Mammary epithelial cell (primary cell): ENCODE measurements at regions of chr10 and their contacts with region 1.

Region 1: DNA sequence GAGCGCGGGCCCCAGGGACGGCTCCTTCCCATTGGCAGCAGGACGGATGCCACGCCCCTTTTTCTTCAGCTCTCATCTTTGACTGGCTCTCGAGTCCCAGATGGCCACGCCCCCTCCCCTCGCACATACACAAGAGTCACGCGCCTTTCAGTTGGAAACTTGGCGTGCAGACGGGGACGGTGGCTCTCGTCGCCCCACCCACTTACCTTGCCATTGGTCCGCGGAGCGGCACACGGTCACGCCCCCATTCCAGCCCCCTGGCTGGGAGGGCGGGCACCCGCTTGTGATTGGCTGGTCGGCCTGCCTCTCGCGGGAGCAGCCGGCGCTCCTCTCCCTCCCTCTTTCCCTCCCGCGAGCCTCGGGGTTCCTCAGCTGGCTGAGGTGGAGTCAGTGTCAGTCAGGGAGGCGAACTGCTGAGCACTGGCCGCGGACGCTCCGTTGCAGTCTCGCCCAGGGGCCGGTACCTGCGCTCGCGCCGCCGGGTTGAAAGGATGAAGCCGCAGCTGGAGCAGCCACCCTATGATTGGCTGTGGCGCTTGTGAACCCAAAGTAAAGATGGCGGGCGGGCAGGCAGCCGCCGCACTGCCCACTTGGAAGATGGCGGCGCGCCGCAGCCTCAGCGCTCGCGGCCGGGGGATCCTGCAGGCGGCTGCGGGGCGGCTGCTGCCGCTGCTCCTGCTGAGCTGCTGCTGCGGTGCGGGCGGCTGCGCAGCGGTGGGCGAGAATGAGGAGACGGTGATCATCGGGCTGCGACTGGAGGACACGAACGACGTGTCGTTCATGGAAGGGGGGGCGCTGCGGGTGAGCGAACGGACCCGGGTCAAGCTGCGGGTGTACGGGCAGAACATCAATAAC is at the start of gene CNNM2:
- DNase-seq: peak; percentile 99
- H3K4me3 ChIP-seq: peak within 1 kb of the TSS; percentile 91 to 99 (median 91)
- H3K27ac ChIP-seq: peak within 1 kb of the TSS; percentile 54
- H3K4me1 ChIP-seq: peaks cover 13% of the 10 kb centered on the region
- H3K27me3 ChIP-seq: no peaks in the 10 kb centered on the region
- CTCF ChIP-seq: no peak
- total RNA-seq, gene CNNM2: 4.5 to 5.5 TPM

Region 2: GRCh38 chr10:102729029-102730026 is 188.9 kb before region 1 on chr10:
- CTCF ChIA-PET with region 1: no interaction called
- dilution Hi-C with region 1: no loop called
- in situ Hi-C with region 1: no loop called
- intact Hi-C with region 1: loop called (anchors 1 kb)
- DNase-seq: peak; percentile 57
- H3K4me3 ChIP-seq: no peak overlapping the region
- H3K27ac ChIP-seq: no peak overlapping the region
- H3K4me1 ChIP-seq: no peaks in the 10 kb centered on the region
- H3K27me3 ChIP-seq: no peaks in the 10 kb centered on the region
- CTCF ChIP-seq: peak; percentile 90

Region 3: DNA sequence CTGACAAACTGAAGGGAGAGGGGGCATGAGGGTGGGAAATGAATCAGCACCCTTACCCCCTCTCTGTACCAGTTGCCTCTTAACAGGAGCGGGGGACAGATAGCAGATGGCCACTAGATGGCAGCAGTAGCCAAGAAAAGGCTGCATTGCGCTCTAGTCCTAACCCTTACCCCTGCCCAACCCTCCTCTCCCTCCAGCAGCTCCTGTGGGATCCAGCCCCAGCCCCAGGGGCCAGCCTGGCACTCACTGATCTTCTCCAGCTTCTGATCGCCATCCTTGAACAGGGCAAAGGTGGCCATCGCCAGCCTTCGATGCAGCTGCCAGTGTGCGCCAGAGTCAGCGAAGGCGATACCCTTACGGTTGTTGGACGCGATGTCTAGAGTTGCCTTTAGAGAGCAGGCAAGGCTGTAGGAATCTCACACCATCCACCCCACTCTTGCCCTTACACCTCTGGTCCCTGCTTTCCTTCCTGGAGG is 83.1 kb before region 1 on chr10:
- CTCF ChIA-PET with region 1: no interaction called
- dilution Hi-C with region 1: no loop called
- in situ Hi-C with region 1: no loop called
- intact Hi-C with region 1: loop called (anchors 1 kb)
- DNase-seq: peak; percentile 39
- H3K4me3 ChIP-seq: no peak overlapping the region
- H3K27ac ChIP-seq: no peak overlapping the region
- H3K4me1 ChIP-seq: no peaks in the 10 kb centered on the region
- H3K27me3 ChIP-seq: no peaks in the 10 kb centered on the region
- CTCF ChIP-seq: peak; percentile 70 to 89

Region 4: DNA sequence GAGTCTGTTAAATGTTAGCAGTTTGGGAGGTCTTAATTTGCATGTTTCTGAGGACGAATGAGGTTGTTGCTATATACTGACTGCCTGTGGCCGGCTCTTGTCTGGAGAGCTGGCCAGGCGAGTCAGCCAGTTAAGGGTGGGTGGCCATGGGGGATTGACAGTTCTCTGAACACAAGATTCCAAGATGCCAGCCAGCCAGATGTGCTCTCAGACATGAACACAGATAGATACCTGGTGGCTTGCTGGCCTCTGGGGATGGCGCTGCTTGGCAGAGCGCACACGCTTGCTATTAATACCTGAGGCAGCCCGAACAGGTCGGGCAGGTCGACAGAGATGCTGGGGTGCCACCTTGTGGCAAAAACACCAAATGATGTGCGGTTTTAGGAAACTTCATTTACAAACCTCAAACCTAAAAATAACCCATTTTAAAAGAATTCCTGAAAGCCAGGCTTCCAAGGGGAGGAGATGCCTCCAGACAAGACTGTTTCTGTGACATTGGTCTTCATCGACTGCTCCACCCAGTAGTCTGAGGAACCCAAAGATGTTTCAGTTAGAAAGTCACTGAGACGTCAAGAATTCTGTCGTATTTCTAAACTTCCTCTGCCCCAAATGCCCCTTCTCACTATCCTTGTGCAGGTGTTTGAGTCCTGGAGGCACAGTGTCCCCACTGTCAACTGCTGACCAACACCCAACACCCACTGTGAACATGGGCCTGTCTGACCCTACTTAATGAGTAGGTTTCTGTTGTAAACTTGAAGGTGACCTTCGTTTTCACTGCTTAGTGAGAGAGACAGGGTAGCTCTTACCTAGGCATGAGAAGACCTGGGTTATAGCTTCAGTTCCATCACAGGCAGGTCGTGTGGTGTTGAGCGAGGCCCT is 151.5 kb after region 1 on chr10:
- CTCF ChIA-PET with region 1: interaction called, 5 read pairs
- dilution Hi-C with region 1: no loop called
- in situ Hi-C with region 1: loop called (anchors 5 kb)
- intact Hi-C with region 1: loop called (anchors 1 kb)
- DNase-seq: peak; percentile 48
- H3K4me3 ChIP-seq: no peak overlapping the region
- H3K27ac ChIP-seq: no peak overlapping the region
- H3K4me1 ChIP-seq: no peaks in the 10 kb centered on the region
- H3K27me3 ChIP-seq: no peaks in the 10 kb centered on the region
- CTCF ChIP-seq: peak; percentile 68 to 73

Region 5: GRCh38 chr10:103333925-103334520 is 415.8 kb after region 1 on chr10:
- CTCF ChIA-PET with region 1: no interaction called
- dilution Hi-C with region 1: no loop called
- in situ Hi-C with region 1: no loop called
- intact Hi-C with region 1: loop called (anchors 1 kb)
- DNase-seq: no peak
- H3K4me3 ChIP-seq: no peak overlapping the region
- H3K27ac ChIP-seq: no peak overlapping the region
- H3K4me1 ChIP-seq: no peaks in the 10 kb centered on the region
- H3K27me3 ChIP-seq: no peaks in the 10 kb centered on the region
- CTCF ChIP-seq: peak; percentile 57 to 70